HepG2 (cell line): ENCODE measurements at regions of chr2 and their contacts with region 1.

Region 1: GRCh38 chr2:62570861-62571698 is 65.1 kb upstream of the TMEM17 start:
- DNase-seq: no peak
- ATAC-seq: peak; percentile 2; the same call in 2 of the 3 replicates
- H3K4me3 ChIP-seq: peak overlapping the region in 2 of 3 experiments; percentile 10 to 65; a peak in 2 of 6 replicates
- H3K27ac ChIP-seq: peak overlapping the region; percentile 97
- H3K4me1 ChIP-seq: peaks cover 95% of the 10 kb centered on the region
- H3K27me3 ChIP-seq: no peaks in the 10 kb centered on the region
- CTCF ChIP-seq: no peak
- EP300 ChIP-seq: no peak
- POLR2A ChIP-seq: no peak; a peak in 2 of 4 replicates
- RAD21 ChIP-seq: no peak

Region 2: GRCh38 chr2:62467475-62468321 is 103.4 kb before region 1 on chr2:
- CTCF ChIA-PET with region 1: no interaction called
- POLR2A ChIA-PET with region 1: interaction called, 37 read pairs
- in situ Hi-C with region 1: no loop called
- intact Hi-C with region 1: no loop called
- DNase-seq: peak; percentile 71
- ATAC-seq: peak; percentile 82
- H3K4me3 ChIP-seq: peak overlapping the region in 1 of 3 experiments; percentile 39; a peak in 2 of 6 replicates
- H3K27ac ChIP-seq: peak overlapping the region; percentile 51
- H3K4me1 ChIP-seq: peaks cover 87% of the 10 kb centered on the region
- H3K27me3 ChIP-seq: no peaks in the 10 kb centered on the region
- CTCF ChIP-seq: peak; percentile 53
- EP300 ChIP-seq: no peak
- POLR2A ChIP-seq: no peak
- RAD21 ChIP-seq: no peak

Region 3: DNA sequence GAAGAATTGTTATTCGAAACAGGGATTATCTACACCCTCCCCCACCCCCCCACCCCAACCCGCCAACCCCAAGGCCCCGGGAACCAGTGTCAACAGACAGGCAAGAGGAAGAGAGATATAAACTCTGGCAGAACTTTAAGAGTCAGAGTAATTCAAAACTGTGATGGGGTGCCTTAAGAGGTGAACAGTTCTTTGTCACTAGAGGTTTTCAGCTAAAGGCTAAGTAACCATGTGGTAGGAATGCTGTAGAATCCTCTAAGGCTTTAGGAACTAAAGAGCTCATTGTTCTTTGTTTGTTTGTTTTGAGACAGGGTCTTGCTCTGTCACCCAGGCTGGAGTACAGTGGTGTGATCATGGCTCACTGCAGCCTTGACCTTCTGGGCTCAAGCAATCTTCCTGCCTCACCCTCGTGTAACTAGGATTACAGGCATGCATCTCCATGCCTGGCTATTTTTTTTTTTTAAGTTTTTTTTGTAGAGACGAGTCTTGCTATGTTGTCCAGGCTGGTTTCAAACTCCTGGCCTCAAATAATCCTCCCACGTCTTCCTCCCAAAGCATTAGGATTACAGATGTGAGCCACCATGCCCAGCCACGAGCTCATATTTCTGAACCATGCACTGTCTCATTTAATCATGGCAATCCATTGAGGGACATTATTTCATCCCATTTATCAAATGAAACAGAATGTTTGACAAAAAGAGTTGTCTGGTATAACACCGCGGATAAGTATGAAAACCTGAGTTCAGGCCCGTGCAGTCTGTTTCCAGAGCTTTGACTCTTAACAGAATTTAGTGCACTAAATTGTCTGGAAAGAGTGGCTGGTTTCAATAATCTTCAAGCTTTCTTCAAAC is 44.3 kb before region 1 on chr2:
- CTCF ChIA-PET with region 1: no interaction called
- POLR2A ChIA-PET with region 1: interaction called, 203 read pairs
- in situ Hi-C with region 1: loop called (anchors 5 kb)
- intact Hi-C with region 1: loop called (anchors 1 kb)
- DNase-seq: peak; percentile 99
- ATAC-seq: peak; percentile 98
- H3K4me3 ChIP-seq: no peak overlapping the region; a peak in 1 of 6 replicates
- H3K27ac ChIP-seq: peak overlapping the region; percentile 98
- H3K4me1 ChIP-seq: peaks cover 69% of the 10 kb centered on the region
- H3K27me3 ChIP-seq: no peaks in the 10 kb centered on the region
- CTCF ChIP-seq: peak; percentile 40
- EP300 ChIP-seq: peak in 1 of 2 experiments; percentile 97; a peak in 2 of 4 replicates
- POLR2A ChIP-seq: no peak; a peak in 1 of 4 replicates
- RAD21 ChIP-seq: peak; percentile 56

Region 4: DNA sequence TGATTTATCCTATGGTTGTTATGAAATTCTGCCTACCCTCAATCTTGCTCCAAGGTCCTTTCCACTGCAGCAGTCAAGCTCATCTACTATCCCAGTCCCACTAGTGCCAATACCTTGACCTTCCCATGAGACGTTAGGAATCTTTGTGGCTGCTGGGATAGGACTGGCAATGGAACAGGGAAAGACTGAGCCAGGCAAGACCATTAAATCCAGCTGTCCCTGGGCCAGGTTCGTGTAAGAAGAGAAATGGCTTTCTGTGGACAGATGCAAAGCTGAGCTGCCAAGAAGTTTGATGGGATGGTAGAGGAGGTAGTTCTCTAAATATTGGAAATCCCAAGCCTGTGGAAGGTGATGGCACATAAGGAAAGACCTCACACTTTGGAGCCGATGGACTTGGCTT is 15.0 kb before region 1 on chr2:
- CTCF ChIA-PET with region 1: no interaction called
- POLR2A ChIA-PET with region 1: interaction called, 25 read pairs
- in situ Hi-C with region 1: no loop called
- intact Hi-C with region 1: no loop called
- DNase-seq: no peak
- ATAC-seq: no peak
- H3K4me3 ChIP-seq: no peak overlapping the region
- H3K27ac ChIP-seq: no peak overlapping the region
- H3K4me1 ChIP-seq: peaks cover 44% of the 10 kb centered on the region
- H3K27me3 ChIP-seq: no peaks in the 10 kb centered on the region
- CTCF ChIP-seq: no peak
- EP300 ChIP-seq: no peak
- POLR2A ChIP-seq: no peak
- RAD21 ChIP-seq: no peak

Region 5: GRCh38 chr2:62641410-62641843 is 70.3 kb after region 1 on chr2:
- CTCF ChIA-PET with region 1: no interaction called
- POLR2A ChIA-PET with region 1: interaction called, 16 read pairs
- in situ Hi-C with region 1: no loop called
- intact Hi-C with region 1: loop called (anchors 1 kb)
- DNase-seq: no peak
- ATAC-seq: no peak
- H3K4me3 ChIP-seq: no peak overlapping the region; a peak in 1 of 6 replicates
- H3K27ac ChIP-seq: peak overlapping the region; percentile 50
- H3K4me1 ChIP-seq: peaks cover 42% of the 10 kb centered on the region
- H3K27me3 ChIP-seq: no peaks in the 10 kb centered on the region
- CTCF ChIP-seq: no peak
- EP300 ChIP-seq: peak in 1 of 2 experiments; percentile 46; a peak in 1 of 4 replicates
- POLR2A ChIP-seq: no peak
- RAD21 ChIP-seq: no peak

Region 6: GRCh38 chr2:62672601-62673000 is 101.5 kb after region 1 on chr2:
- CTCF ChIA-PET with region 1: no interaction called
- POLR2A ChIA-PET with region 1: interaction called, 13 read pairs
- in situ Hi-C with region 1: no loop called
- intact Hi-C with region 1: no loop called
- DNase-seq: peak; percentile 83
- ATAC-seq: peak; percentile 95
- H3K4me3 ChIP-seq: no peak overlapping the region
- H3K27ac ChIP-seq: no peak overlapping the region
- H3K4me1 ChIP-seq: peaks cover 43% of the 10 kb centered on the region
- H3K27me3 ChIP-seq: no peaks in the 10 kb centered on the region
- CTCF ChIP-seq: no peak
- EP300 ChIP-seq: peak in 1 of 2 experiments; percentile 69; a peak in 1 of 4 replicates
- POLR2A ChIP-seq: no peak
- RAD21 ChIP-seq: no peak

Region 7: GRCh38 chr2:62774555-62775366 is 203.7 kb after region 1 on chr2:
- CTCF ChIA-PET with region 1: no interaction called
- POLR2A ChIA-PET with region 1: interaction called, 18 read pairs
- in situ Hi-C with region 1: no loop called
- intact Hi-C with region 1: loop called (anchors 2 kb)
- DNase-seq: peak; percentile 78
- ATAC-seq: peak; percentile 85
- H3K4me3 ChIP-seq: no peak overlapping the region
- H3K27ac ChIP-seq: peak overlapping the region; percentile 41
- H3K4me1 ChIP-seq: peaks cover 23% of the 10 kb centered on the region
- H3K27me3 ChIP-seq: no peaks in the 10 kb centered on the region
- CTCF ChIP-seq: peak; percentile 73
- EP300 ChIP-seq: peak in 1 of 2 experiments; percentile 52; a peak in 2 of 4 replicates
- POLR2A ChIP-seq: no peak
- RAD21 ChIP-seq: peak; percentile 75

Region 8: GRCh38 chr2:62856228-62857040 is 285.4 kb after region 1 on chr2:
- CTCF ChIA-PET with region 1: no interaction called
- POLR2A ChIA-PET with region 1: no interaction called
- in situ Hi-C with region 1: no loop called
- intact Hi-C with region 1: no loop called
- DNase-seq: no peak
- ATAC-seq: peak; percentile 48
- H3K4me3 ChIP-seq: no peak overlapping the region
- H3K27ac ChIP-seq: no peak overlapping the region
- H3K4me1 ChIP-seq: no peaks in the 10 kb centered on the region
- H3K27me3 ChIP-seq: no peaks in the 10 kb centered on the region
- CTCF ChIP-seq: no peak
- EP300 ChIP-seq: no peak
- POLR2A ChIP-seq: no peak
- RAD21 ChIP-seq: no peak